MCF 10A (cell line): ENCODE measurements at regions of chr1 and their contacts with region 1.

Region 1: DNA sequence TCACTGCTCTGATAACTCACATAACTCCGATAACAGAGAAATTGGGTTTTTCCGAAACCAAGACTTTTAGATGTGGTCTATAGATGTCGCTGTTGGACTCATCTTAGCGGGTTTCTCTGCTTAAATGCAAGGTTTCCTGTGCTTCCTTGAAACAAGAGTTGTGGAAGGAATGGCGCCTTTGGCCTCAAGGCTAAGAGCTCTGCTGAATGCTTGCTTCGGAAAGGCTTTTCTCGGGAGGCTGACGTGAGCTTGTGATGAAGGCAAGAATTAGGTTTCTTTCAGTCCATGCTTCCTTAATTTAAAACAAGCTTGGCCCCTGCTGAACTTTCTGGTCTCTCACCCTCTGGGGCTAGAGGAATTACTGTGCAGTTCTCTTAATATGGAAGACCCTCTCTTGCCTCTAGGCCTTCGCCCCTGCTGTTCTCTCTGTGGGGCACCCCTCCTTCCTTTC is 113.5 kb downstream of the MAP3K21 start:
- DNase-seq: peak; percentile 90
- H3K4me3 Mint-ChIP-seq: no peak overlapping the region
- H3K27ac Mint-ChIP-seq: no peak overlapping the region
- H3K4me1 Mint-ChIP-seq: peaks cover 18% of the 10 kb centered on the region
- H3K27me3 Mint-ChIP-seq: no peaks in the 10 kb centered on the region
- CTCF ChIP-seq: peak; percentile 99

Region 2: DNA sequence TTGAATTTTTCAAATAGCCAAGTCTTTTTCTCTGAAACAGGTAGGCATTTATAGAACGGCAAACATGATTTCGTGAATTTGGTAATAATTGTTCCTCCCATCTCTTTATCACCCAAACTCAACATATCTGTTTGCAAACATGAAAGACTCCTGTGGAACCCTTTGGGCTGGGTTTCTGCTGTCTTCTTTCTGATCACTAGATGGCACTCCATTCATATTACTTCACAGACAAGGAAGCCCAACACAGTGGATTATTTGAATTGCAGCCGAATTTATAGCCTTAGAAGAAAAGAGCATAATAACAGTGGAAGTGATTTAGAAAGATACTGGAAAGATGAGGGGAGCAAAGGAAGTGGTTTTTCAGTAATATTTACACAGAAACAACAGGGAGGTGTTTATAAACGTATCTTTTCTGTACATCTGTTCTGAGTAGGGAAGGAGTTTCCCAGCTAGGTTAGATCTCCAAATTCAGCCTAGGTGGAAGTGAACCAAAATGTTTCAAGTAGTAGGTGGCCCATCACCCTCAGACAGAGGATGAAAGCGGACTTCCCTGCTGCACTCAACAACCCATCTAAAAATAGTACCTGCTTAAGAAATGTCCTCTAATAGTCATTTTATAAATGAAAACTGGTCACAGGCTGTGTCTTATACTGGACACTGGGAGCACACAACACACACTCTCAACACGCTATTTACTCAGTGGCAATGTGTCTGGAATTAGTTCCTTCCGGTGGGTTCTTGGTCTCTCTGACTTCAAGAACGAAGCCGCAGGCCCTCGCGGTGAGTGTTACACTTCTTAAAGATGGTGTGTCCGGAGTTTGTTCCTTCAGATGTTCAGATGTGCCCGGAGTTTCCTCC is 45.9 kb before region 1 on chr1:
- CTCF ChIA-PET with region 1: interaction called, 74 read pairs
- POLR2A ChIA-PET with region 1: interaction called, 4 read pairs
- intact Hi-C with region 1: loop called (anchors 2 kb)
- DNase-seq: peak; percentile 81
- H3K4me3 Mint-ChIP-seq: no peak overlapping the region
- H3K27ac Mint-ChIP-seq: no peak overlapping the region
- H3K4me1 Mint-ChIP-seq: no peaks in the 10 kb centered on the region
- H3K27me3 Mint-ChIP-seq: no peaks in the 10 kb centered on the region
- CTCF ChIP-seq: peak; percentile 98

Region 3: GRCh38 chr1:233527818-233528217 is 86.8 kb after region 1 on chr1:
- CTCF ChIA-PET with region 1: interaction called, 24 read pairs
- POLR2A ChIA-PET with region 1: no interaction called
- intact Hi-C with region 1: no loop called
- DNase-seq: no peak
- H3K4me3 Mint-ChIP-seq: no peak overlapping the region
- H3K27ac Mint-ChIP-seq: no peak overlapping the region
- H3K4me1 Mint-ChIP-seq: no peaks in the 10 kb centered on the region
- H3K27me3 Mint-ChIP-seq: no peaks in the 10 kb centered on the region
- CTCF ChIP-seq: no peak

Region 4: GRCh38 chr1:233668725-233669294 is 227.8 kb after region 1 on chr1:
- CTCF ChIA-PET with region 1: interaction called, 17 read pairs
- POLR2A ChIA-PET with region 1: no interaction called
- intact Hi-C with region 1: no loop called
- DNase-seq: peak; percentile 96
- H3K4me3 Mint-ChIP-seq: no peak overlapping the region
- H3K27ac Mint-ChIP-seq: peak overlapping the region; percentile 92
- H3K4me1 Mint-ChIP-seq: peaks cover 29% of the 10 kb centered on the region
- H3K27me3 Mint-ChIP-seq: no peaks in the 10 kb centered on the region
- CTCF ChIP-seq: no peak

Region 5: DNA sequence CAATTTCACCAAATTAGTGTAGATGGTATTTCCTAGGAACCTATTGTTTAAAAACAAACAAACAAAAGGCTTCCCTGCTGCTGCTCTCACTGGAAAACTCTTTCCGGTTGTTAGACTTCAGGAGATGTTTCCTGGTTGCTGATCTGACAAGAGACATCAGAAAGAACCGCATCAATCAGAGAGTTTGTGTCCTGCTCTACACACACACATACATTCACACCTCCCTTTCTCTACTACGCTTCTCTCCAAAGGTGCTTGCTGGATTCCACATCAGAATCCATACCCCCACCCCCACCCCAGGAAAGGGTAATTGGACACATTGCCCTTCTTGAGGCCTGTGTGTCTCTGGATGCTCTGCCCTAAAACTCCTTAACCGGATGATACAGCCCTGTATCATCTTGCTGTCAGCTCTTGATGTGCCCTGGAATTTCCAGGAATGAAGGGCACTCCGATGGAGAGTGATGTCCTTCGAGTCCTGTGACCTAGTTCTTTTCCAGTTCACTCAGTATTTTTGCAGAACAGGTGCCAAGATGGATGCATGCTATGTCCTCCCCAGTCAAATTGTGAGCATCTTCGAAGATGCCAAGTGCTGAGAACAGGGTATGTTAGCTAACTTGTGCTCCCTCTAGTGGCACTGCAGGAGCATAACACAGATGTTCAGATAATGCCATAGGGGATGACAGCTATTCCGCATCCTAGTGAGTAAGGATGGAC is 349.8 kb after region 1 on chr1:
- CTCF ChIA-PET with region 1: interaction called, 230 read pairs
- POLR2A ChIA-PET with region 1: interaction called, 16 read pairs
- intact Hi-C with region 1: loop called (anchors 1 kb)
- DNase-seq: peak; percentile 84
- H3K4me3 Mint-ChIP-seq: no peak overlapping the region
- H3K27ac Mint-ChIP-seq: no peak overlapping the region
- H3K4me1 Mint-ChIP-seq: no peaks in the 10 kb centered on the region
- H3K27me3 Mint-ChIP-seq: no peaks in the 10 kb centered on the region
- CTCF ChIP-seq: peak; percentile 100

Region 6: GRCh38 chr1:234072793-234073192 is 631.8 kb after region 1 on chr1:
- CTCF ChIA-PET with region 1: interaction called, 157 read pairs
- POLR2A ChIA-PET with region 1: interaction called, 3 read pairs
- intact Hi-C with region 1: no loop called
- DNase-seq: no peak
- H3K4me3 Mint-ChIP-seq: no peak overlapping the region
- H3K27ac Mint-ChIP-seq: no peak overlapping the region
- H3K4me1 Mint-ChIP-seq: no peaks in the 10 kb centered on the region
- H3K27me3 Mint-ChIP-seq: no peaks in the 10 kb centered on the region
- CTCF ChIP-seq: no peak